ENCODE measurements at regions of chr11 and their contacts with region 1.

Region 1: GRCh38 chr11:68661481-68662258 is 22.7 kb upstream of the GAL start:
- DNase-seq: peak in 1 of 2 donors; percentile 41
- H3K4me3 ChIP-seq: no peak overlapping the region
- H3K27ac ChIP-seq: no peak overlapping the region
- H3K4me1 ChIP-seq: peaks cover 4 to 10% of the 10 kb centered on the region in 2 donors
- H3K27me3 ChIP-seq: peaks cover 0 to 5% of the 10 kb centered on the region in 2 donors
- CTCF ChIP-seq: no peak
- POLR2A ChIP-seq: no peak

Region 2: DNA sequence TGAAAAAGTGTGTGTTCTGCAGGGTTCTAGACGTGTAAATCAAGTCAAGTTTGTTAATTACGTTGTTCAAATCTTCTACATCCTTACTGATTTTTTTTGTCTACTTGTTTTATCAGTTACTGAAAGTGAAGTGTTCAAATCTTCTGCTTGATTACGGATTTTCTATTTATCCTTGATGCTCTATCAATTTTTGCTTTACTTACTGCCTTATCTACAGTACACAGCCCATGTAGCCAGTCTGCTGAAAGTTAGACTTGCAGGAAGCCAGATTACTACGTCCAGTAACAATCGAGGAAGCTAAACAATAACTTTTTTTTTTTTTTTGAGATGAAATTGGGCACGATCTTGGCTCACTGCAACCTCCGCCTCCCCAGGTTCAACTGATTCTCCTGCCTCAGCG is 374.3 kb before region 1 on chr11:
- intact Hi-C with region 1: loop called (anchors 5 kb)
- DNase-seq: no peak
- H3K4me3 ChIP-seq: no peak overlapping the region
- H3K27ac ChIP-seq: no peak overlapping the region
- H3K4me1 ChIP-seq: no peaks in the 10 kb centered on the region
- H3K27me3 ChIP-seq: no peaks in the 10 kb centered on the region
- CTCF ChIP-seq: no peak
- POLR2A ChIP-seq: no peak

Region 3: GRCh38 chr11:69048718-69049489 is 387.2 kb after region 1 on chr11 and contains the start of gene TPCN2:
- intact Hi-C with region 1: no loop called
- DNase-seq: peak; percentile 80 to 85
- H3K4me3 ChIP-seq: peak within 1 kb of the TSS; percentile 87 to 97 (median 94)
- H3K27ac ChIP-seq: peak within 1 kb of the TSS; percentile 83 to 89
- H3K4me1 ChIP-seq: peaks cover 0 to 7% of the 10 kb centered on the region in 2 donors
- H3K27me3 ChIP-seq: no peaks in the 10 kb centered on the region
- CTCF ChIP-seq: no peak
- POLR2A ChIP-seq: no peak
- total RNA-seq, gene TPCN2: 13.0 to 18.0 (median 13.8) TPM

Measured in breast epithelium (tissue), 4 donors.